Testis (tissue), 5 donors: ENCODE measurements at regions of chr3 and their contacts with region 1.

Region 1: DNA sequence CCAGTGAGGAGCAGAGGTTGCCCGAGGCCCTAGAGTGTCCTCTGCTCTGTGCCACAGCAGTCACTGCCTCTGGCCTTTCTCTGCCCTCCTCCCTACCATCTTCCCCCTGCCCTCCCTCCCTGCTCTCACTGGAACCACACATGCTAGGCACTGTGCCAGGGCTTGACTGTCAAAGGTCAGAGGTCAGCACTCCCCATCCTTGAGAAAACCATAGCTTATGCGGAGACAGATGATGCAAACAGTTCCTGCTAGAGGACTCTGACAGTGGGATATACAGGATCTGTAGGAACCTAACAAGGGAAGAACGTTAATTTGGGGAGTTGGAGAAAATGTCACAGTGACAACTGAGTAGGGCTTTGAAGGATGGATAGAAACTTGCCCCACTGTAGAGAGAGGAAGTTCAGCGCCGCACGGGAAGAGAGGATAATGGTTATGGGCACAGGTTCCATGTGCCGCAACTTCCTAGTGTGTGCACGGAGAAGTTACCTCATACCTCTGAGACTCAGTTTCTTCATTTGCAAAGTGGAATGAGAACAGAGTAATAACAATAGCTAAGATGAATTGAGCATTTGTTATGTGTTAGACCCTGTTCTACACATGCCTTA is 29.3 kb upstream of the XYLB start:
- DNase-seq: no peak
- H3K4me3 ChIP-seq: no peak overlapping the region
- H3K27ac ChIP-seq: no peak overlapping the region
- H3K4me1 ChIP-seq: no peaks in the 10 kb centered on the region
- H3K27me3 ChIP-seq: no peaks in the 10 kb centered on the region
- CTCF ChIP-seq: no peak
- POLR2A ChIP-seq: no peak

Region 2: DNA sequence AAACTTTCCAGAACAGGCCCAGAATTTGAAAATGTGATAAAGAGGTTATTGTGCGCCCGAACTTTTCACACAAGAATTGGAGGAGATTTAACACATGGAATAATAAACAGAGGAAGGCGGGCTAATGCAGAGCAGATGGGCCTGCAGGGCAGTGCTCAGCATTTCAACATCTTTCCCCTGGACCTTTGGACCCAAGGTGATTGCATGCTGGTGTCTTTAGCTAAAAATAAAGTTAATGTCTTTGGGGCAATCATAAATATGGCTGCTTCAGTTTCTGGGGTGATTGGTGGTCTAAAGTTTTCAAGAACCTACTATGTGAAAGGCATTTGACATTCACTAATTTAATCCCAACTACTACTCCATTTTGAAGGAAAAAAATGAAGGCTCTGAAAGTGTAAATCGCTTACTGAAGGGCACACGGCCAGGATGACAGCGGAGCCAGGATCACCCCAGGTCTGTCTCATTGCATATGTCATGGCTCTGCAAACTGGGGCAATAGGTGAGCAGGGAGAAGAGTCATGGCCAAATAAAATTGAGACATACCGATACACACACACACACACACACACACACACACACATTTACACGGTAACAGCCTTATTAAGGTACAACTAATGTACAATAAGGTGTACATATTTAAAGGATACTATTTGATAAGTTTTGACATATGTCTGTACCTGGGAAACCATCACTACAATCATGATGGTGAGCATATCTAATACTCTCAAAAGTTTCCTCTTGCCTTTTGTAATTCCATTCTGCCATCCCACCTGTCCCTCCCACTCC is 899.8 kb before region 1 on chr3:
- intact Hi-C with region 1: loop called (anchors 10 kb)
- DNase-seq: no peak
- H3K4me3 ChIP-seq: no peak overlapping the region
- H3K27ac ChIP-seq: no peak overlapping the region
- H3K4me1 ChIP-seq: no peaks in the 10 kb centered on the region
- H3K27me3 ChIP-seq: no peaks in the 10 kb centered on the region
- CTCF ChIP-seq: no peak
- POLR2A ChIP-seq: no peak

Region 3: GRCh38 chr3:38039101-38039898 is 278.0 kb before region 1 on chr3 and contains the start of gene DLEC1:
- intact Hi-C with region 1: no loop called
- DNase-seq: peak; percentile 90
- H3K4me3 ChIP-seq: peak within 1 kb of the TSS; percentile 55 to 63
- H3K27ac ChIP-seq: peak within 1 kb of the TSS; percentile 57 to 74
- H3K4me1 ChIP-seq: peaks cover 12% of the 10 kb centered on the region
- H3K27me3 ChIP-seq: no peaks in the 10 kb centered on the region
- CTCF ChIP-seq: no peak
- POLR2A ChIP-seq: no peak
- total RNA-seq, gene DLEC1: 32.3 to 40.8 TPM

Region 4: DNA sequence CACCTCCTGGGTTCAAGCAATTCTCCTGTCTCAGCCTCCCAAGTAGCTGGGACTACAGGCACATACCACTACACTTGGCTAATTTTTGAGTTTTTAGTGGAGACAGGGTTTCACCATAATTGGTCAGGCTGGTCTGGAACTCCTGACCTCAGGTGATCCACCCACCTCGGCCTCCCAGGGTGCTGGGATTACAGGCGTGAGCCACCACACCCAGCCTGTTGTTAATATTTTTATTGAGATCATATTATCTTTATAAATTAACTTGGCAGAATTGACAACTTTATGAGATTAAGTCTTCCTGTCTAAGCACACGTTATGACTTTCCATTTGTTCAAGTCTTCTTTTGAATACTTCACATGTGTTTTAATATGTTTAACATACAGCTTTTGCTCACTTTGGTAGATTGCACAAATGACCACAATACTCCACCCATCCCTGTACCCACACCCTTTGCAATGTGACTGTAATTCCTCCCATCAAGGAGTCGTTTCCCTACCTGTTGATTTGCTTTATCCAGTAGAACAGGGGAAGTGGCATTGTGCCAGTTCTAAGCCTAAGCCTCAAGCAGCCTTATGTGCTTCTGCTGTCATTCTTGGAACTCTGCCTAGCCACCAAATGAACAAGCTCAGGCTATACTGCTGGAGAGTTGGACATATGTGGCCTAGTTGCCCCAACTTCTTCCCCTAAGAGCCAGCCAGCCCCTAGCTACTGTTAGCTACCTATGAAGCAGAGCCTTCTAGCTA is 37.5 kb after region 1 on chr3:
- intact Hi-C with region 1: no loop called
- DNase-seq: no peak
- H3K4me3 ChIP-seq: no peak overlapping the region
- H3K27ac ChIP-seq: no peak overlapping the region
- H3K4me1 ChIP-seq: no peaks in the 10 kb centered on the region
- H3K27me3 ChIP-seq: no peaks in the 10 kb centered on the region
- CTCF ChIP-seq: no peak
- POLR2A ChIP-seq: no peak